ENCODE measurements at regions of chr6 and their contacts with region 1.

Region 1: DNA sequence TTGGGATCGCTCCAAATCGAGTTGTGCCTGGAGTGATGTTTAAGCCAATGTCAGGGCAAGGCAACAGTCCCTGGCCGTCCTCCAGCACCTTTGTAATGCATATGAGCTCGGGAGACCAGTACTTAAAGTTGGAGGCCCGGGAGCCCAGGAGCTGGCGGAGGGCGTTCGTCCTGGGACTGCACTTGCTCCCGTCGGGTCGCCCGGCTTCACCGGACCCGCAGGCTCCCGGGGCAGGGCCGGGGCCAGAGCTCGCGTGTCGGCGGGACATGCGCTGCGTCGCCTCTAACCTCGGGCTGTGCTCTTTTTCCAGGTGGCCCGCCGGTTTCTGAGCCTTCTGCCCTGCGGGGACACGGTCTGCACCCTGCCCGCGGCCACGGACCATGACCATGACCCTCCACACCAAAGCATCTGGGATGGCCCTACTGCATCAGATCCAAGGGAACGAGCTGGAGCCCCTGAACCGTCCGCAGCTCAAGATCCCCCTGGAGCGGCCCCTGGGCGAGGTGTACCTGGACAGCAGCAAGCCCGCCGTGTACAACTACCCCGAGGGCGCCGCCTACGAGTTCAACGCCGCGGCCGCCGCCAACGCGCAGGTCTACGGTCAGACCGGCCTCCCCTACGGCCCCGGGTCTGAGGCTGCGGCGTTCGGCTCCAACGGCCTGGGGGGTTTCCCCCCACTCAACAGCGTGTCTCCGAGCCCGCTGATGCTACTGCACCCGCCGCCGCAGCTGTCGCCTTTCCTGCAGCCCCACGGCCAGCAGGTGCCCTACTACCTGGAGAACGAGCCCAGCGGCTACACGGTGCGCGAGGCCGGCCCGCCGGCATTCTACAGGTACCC is at the start of gene ESR1:
- DNase-seq: peak; percentile 36 to 63
- ATAC-seq: peak; percentile 10 to 11
- H3K4me3 ChIP-seq: peak within 1 kb of the TSS; percentile 65 to 77 (median 68)
- H3K27ac ChIP-seq: peak within 1 kb of the TSS; percentile 79 to 92 (median 86)
- H3K4me1 ChIP-seq: peaks cover 25 to 41% of the 10 kb centered on the region in 2 donors
- H3K27me3 ChIP-seq: no peaks in the 10 kb centered on the region
- CTCF ChIP-seq: no peak
- POLR2A ChIP-seq: peak in 1 of 2 donors; percentile 53
- total RNA-seq, gene ESR1: 0.61 to 1.1 (median 1.1) TPM

Region 2: DNA sequence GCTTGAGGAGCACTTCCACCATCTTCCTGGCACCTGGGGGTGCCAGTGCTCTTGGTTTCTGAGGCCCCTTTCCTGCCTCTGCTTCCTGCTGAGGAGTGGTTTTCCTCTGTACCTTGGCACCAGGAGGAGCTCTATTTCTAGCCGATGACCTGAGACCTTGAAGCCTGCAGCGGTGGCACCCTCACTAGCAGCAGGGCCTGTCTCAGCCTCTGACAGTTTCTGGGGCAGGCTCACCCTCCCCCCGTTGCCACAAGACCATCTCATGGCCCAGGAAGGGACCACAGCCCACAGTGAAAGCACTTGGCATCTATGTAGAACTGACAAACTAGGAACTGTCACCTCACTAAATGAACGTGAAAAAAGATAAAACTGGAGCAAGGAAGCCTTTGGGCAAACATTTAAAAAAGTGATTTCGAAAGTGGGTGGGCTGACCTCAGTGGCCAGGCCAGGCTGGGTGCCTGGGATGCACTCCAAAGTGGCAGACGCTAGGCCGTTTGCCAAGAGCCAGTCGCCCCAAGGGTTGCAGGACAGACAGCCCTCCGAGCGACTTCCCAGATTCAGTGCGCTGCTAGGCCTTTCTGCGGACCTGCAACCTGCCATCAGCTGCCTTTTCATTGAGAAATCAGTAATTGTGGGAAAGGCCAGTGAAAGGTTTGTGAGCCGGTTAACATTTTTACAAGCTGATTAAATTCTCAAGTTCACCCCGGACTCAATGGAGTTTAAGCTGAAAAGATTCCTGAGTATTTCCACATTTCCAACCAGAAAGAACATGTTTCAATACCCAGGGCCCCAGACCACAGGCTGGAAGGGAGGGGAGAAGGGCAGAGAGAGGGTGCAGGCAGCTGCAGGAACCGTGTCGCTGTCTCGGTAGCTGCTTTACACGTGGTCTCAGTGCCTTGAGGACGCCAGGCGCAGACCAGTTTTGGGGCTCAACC is 303.4 kb after region 1 on chr6:
- in situ Hi-C with region 1: no loop called
- intact Hi-C with region 1: loop called (anchors 5 kb)
- DNase-seq: peak; percentile 76 to 92
- ATAC-seq: peak; percentile 97 to 98
- H3K4me3 ChIP-seq: peak overlapping the region; percentile 10 to 43 (median 20)
- H3K27ac ChIP-seq: peak overlapping the region; percentile 82 to 87 (median 86)
- H3K4me1 ChIP-seq: peaks cover 23 to 29% of the 10 kb centered on the region in 2 donors
- H3K27me3 ChIP-seq: no peaks in the 10 kb centered on the region
- CTCF ChIP-seq: no peak
- POLR2A ChIP-seq: no peak

Region 3: DNA sequence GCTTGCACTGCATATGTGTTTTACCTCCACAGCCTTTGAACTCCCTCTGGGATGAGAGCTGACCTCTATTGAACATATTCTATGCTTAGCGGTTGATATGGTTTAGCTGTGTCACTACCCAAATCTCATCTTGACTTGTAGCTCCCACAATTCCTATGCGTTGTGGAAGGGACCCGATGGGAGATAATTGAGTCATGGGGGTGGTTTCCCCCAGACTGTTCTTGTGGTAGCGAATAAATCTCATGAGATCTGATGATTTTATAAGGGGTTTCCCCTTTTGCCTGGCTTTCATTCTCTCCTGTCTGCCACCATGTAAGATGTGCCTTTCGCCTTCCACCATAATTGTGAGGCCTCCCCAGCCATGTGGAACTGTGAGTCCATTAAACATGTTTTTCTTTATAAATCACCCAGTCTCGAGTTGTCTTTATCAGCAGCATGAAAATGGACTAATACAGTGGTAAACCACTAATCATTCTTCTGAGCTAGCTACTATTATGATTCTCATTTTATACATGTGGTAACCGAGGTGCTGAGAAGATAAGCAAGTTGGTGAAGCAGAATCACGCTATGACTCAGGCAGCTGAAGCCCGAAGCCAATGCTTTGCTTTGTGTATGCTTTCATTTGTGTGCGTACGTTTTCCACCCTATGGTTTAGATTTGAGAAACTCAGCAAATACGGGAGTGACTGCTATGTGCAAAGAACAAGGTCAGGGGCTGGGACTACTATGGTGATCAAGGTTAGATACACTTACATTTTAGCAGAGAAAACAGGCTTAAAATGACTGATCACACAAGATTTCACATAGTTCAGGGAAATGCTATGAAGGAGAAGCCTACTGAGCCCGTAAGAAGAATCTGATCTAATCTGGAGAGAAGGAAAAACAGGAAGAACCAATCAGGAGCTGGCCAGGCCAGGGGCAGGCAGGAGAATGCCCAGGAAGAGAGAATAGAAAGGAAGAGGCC is 363.2 kb after region 1 on chr6:
- in situ Hi-C with region 1: no loop called
- intact Hi-C with region 1: loop called (anchors 5 kb)
- DNase-seq: no peak
- ATAC-seq: no peak
- H3K4me3 ChIP-seq: no peak overlapping the region
- H3K27ac ChIP-seq: peak overlapping the region; percentile 88 to 95 (median 92)
- H3K4me1 ChIP-seq: peaks cover 40 to 56% of the 10 kb centered on the region in 2 donors
- H3K27me3 ChIP-seq: no peaks in the 10 kb centered on the region
- CTCF ChIP-seq: no peak
- POLR2A ChIP-seq: no peak